Endothelial cell of umbilical vein (primary cell): ENCODE measurements at regions of chr16 and their contacts with region 1.

Region 1: GRCh38 chr16:66275775-66276428 is 90.6 kb upstream of the CDH5 start:
- DNase-seq: peak; percentile 73
- H3K4me3 ChIP-seq: no peak overlapping the region
- H3K27ac ChIP-seq: no peak overlapping the region
- H3K4me1 ChIP-seq: peaks cover 4% of the 10 kb centered on the region
- H3K27me3 ChIP-seq: peaks cover 2 to 5% of the 10 kb centered on the region in 2 experiments
- CTCF ChIP-seq: peak; percentile 70 to 86
- POLR2A ChIP-seq: no peak

Region 2: DNA sequence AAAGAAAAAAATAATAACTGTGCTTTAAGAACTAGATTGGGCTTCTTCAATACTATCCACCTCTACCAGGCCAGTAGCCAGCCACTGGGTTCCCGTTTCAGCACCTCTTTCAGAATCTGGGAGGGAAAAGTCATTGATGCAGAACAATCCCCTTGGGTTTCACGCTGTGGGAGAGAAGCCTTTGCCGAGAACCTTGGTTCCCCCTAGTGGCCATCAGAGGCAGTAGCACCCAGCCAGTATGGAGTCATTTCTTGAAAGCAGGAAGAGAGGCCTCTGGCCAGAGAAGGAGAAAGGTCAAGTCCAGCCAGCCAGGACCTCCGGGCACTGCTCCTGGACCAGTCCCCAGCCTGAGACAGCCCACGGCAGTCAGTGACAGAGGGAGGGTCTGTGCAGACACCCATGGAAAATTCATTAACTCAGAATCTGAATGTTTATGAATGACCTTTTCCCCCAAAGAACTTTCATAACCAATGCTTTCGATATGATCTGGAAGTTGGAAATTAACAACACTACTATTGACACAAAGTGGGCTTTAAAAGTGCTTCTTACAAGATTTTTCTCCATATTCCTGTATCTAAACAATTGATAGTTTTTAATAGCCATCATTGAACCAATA is 39.4 kb after region 1 on chr16:
- CTCF ChIA-PET with region 1: interaction called, 51 read pairs
- POLR2A ChIA-PET with region 1: no interaction called
- dilution Hi-C with region 1: no loop called
- intact Hi-C with region 1: loop called (anchors 1 kb)
- DNase-seq: peak; percentile 73
- H3K4me3 ChIP-seq: no peak overlapping the region
- H3K27ac ChIP-seq: no peak overlapping the region
- H3K4me1 ChIP-seq: no peaks in the 10 kb centered on the region
- H3K27me3 ChIP-seq: no peaks in the 10 kb centered on the region
- CTCF ChIP-seq: peak; percentile 93 to 96
- POLR2A ChIP-seq: no peak

Region 3: GRCh38 chr16:66344533-66345145 is 68.7 kb after region 1 on chr16:
- CTCF ChIA-PET with region 1: interaction called, 22 read pairs
- POLR2A ChIA-PET with region 1: no interaction called
- dilution Hi-C with region 1: no loop called
- intact Hi-C with region 1: loop called (anchors 2 kb)
- DNase-seq: peak; percentile 52
- H3K4me3 ChIP-seq: no peak overlapping the region
- H3K27ac ChIP-seq: no peak overlapping the region
- H3K4me1 ChIP-seq: no peaks in the 10 kb centered on the region
- H3K27me3 ChIP-seq: peaks cover 0 to 2% of the 10 kb centered on the region in 2 experiments
- CTCF ChIP-seq: peak; percentile 59 to 65
- POLR2A ChIP-seq: no peak